ENCODE measurements at regions of chr18 and their contacts with region 1.

Region 1: DNA sequence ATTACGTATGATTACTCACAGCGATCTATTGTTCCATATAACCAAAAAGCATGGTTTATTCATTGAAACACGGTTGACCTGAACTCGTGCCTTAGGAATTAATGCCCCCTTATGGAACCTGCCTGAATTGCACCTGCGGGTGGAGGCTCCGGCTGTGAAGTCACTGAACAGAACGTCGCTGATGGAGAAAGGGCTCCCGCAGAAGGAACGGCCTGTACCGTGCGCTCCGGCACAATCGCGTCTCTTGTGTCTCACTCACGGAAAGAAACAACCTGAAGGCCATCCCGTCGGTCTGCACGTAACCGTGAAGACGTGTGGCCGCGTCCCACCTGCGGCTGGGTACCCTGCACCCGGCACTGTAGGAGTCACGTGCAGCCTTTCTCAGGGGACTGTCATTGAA is 133.1 kb downstream of the NFATC1 start:
- DNase-seq: peak; percentile 75
- ATAC-seq: peak; percentile 86
- H3K4me3 ChIP-seq: no peak overlapping the region
- H3K27ac ChIP-seq: no peak overlapping the region
- H3K4me1 ChIP-seq: no peaks in the 10 kb centered on the region
- H3K27me3 ChIP-seq: peaks cover 3% of the 10 kb centered on the region; the same call in 1 of the 2 replicates
- CTCF ChIP-seq: no peak

Region 2: DNA sequence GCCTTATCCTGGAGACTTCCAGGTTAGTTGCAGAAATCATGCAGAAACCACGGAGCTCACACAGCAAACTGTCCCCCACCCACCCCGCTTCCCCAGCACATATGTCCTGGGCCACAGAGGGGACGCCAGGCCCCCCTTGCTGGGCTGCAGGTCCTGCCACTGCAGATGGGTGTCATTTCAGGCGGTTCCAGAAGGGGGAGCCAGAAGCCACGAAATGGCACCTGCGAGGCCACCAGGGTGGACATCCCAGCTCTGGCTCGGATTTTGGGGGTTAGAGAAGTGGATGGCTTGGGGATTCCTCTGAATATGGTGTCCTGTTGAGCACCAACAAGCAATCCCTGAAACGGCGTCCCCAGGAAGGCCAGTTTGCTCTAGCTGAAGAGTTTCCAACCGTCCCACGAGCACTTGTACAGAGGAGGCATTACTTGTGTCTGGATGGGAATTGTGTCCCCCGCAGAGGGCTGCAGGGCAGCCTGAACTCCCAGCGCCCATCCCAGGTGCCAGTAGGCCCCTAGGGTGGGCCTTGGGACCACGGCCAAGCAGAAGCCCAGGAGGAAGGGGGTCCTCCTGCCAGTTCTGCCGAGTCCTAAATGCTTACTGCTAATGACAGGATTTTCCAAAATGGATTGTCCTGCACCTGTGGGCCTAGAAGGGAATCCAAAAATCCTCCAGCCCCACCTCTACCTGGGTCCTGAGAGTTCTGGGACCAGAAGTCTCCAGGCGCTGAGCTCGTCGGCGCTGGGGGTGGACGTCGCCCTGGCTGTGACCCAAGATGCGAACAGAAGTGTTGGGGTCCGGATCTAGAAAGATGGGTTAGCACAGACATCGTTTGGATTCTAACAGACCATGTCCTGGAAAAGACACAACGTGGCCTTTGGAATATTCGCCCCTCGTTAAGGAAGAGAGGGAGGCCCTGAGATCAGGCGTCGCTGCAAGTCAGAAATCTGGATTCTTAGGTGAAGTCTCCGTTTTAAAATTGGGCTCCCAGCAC is 147.7 kb before region 1 on chr18:
- CTCF ChIA-PET with region 1: interaction called, 4 read pairs
- POLR2A ChIA-PET with region 1: no interaction called
- in situ Hi-C with region 1: no loop called
- intact Hi-C with region 1: loop called (anchors 2 kb)
- DNase-seq: no peak
- ATAC-seq: peak; percentile 73
- H3K4me3 ChIP-seq: no peak overlapping the region
- H3K27ac ChIP-seq: no peak overlapping the region
- H3K4me1 ChIP-seq: no peaks in the 10 kb centered on the region; the same call in 1 of the 2 replicates
- H3K27me3 ChIP-seq: no peaks in the 10 kb centered on the region; the same call in 1 of the 2 replicates
- CTCF ChIP-seq: no peak

Region 3: DNA sequence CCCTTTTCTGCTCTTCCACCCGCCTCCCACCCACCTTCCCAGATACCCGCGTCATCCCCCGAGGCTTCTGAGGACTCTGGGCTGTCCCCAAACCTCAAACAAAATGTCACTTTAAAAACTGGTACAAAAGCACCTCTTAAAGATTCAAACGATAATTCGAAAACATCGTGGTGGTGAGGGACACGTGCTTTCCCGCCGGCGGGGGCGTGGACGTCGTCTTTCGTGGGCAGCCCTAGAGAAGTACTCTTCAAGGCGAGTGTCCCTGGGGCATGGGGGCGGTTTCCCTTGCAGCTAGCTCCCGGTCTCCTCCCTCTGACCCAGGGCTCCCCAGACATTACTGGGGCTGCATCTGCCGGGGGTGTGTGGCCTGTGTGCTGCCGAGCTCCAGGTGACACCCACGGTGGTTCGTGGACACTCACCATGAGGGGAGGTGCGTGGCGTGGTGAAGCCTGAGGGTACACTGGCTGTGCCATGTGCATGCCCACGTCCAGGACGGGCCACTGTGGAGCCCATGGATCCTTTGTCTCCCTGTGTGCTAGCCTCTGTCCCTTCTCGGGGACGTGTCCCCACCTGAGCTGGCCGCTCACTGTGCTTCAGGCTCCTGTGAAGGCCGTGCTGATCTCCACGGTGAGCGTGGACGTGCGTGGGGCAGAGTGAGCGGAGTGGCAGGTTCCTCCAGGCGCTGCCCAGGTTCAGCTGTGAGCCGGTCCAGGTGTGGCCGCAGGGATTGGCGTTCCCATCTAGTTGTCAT is 15.3 kb before region 1 on chr18:
- CTCF ChIA-PET with region 1: no interaction called
- POLR2A ChIA-PET with region 1: no interaction called
- in situ Hi-C with region 1: no loop called
- intact Hi-C with region 1: no loop called
- DNase-seq: no peak
- ATAC-seq: no peak
- H3K4me3 ChIP-seq: no peak overlapping the region
- H3K27ac ChIP-seq: no peak overlapping the region
- H3K4me1 ChIP-seq: no peaks in the 10 kb centered on the region
- H3K27me3 ChIP-seq: no peaks in the 10 kb centered on the region
- CTCF ChIP-seq: no peak

Region 4: DNA sequence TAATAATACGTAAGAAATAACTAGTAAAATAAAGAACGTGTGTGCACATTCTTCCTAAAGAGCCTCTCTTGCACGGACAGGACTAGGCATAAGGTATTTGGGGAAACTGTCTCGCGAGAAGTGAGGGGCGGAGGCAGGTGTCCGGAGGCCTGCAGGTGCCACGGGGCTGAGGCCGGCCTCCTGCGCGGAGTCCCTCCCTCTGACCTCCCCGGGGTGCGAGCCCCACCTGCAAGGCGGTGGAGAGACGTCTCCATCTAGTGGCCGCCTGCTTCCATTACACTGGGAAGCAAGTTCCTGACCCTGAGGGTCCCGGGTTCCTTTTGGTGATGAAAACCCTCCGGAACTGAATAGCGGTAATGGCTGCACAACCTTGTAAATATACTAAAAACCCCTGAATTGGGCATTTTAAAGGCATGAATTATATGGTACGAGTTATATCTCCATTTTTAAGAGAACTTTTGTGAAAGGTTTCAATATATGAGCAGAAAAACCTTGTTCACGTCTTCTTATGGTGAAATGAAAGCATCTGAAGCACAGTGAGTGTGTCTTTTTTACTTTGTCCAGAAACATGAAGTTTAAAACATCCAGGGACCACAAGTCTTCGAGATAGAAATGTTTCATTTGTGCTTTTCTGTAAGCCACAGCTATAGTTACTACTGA is 115.3 kb after region 1 on chr18:
- CTCF ChIA-PET with region 1: no interaction called
- POLR2A ChIA-PET with region 1: no interaction called
- in situ Hi-C with region 1: no loop called
- intact Hi-C with region 1: loop called (anchors 2 kb)
- DNase-seq: peak; percentile 32
- ATAC-seq: peak; percentile 93
- H3K4me3 ChIP-seq: peak overlapping the region in 1 of 2 experiments; percentile 9; a peak in 1 of 4 replicates
- H3K27ac ChIP-seq: no peak overlapping the region
- H3K4me1 ChIP-seq: peaks cover 5% of the 10 kb centered on the region; the same call in 1 of the 2 replicates
- H3K27me3 ChIP-seq: no peaks in the 10 kb centered on the region
- CTCF ChIP-seq: no peak